HCT116 (cell line): ENCODE measurements at regions of chr1 and their contacts with region 1.

Region 1: DNA sequence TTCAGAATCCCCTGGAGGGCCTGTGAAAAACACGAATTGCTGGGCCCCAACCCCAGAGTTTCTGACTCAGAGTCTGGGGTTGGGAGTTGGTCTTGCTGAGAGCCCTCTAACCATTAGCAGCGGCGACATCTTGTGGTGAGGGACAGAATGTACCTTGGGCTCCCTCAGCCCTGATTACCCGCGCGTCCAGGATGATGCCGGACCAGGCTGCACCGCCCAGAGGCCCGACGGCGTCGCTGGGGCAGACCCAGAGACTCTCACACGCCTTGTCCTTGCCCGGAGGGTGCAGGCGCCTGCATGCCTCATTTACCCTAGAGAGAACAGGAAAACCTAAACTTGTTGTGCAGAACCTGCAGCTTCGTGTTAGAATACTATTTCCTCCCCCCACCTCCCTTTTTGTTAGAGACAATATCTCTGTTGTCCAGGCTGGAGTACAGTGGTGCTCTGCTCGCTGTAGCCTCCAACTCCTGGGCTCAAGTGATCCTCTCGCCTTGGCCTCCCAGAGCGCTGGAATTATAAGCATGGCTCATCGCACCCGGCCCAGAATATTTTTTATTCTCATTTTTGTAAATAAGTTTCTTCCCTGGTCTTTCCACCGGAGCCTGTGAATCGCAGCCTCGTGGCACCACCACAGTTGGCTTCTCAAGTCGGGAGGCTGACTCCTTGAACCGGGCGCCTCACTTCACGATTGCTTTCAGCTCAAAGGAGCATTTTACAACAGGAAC is 22.2 kb upstream of the RD3 start:
- DNase-seq: peak; percentile 71
- ATAC-seq: peak; percentile 76
- H3K4me3 ChIP-seq: peak overlapping the region in 1 of 2 experiments; percentile 26; a peak in 1 of 4 replicates
- H3K27ac ChIP-seq: peak overlapping the region; percentile 51; the same call in 1 of the 2 replicates
- H3K4me1 ChIP-seq: peaks cover 36 to 46% of the 10 kb centered on the region in 2 experiments
- H3K27me3 ChIP-seq: no peaks in the 10 kb centered on the region
- CTCF ChIP-seq: peak; percentile 74 to 88 (median 80)
- POLR2A ChIP-seq: no peak
- RAD21 ChIP-seq: peak; percentile 96

Region 2: DNA sequence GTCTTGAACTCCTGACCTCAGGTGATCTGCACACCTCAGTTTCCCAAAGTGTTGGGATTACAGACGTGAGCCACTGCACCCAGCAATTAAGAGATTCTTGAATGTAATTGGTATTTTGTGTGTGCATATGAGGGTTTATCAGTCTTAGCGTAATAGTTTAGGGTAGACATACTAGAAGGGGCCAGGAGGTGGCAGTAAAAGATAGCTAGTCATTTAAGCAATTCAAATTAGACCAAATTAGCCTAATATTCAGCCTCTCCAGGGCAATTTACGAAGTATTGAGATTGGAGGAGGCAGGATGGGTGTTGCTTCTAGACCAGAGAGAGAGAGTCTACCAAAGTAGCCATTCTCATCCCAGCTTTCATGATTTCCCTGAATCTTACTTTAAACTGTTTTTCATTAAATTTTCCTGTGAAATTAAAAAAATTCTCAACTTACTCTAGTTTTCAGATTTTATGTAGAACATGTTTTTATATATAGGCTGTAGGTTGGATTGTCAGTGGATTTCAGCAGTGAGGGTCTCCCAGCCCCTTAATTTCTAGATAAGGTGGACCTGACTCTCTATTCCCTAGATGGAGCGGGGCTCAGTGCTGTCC is 1065.8 kb before region 1 on chr1:
- CTCF ChIA-PET with region 1: interaction called, 3 read pairs
- POLR2A ChIA-PET with region 1: no interaction called
- RAD21 ChIA-PET with region 1: no interaction called
- intact Hi-C with region 1: loop called (anchors 10 kb)
- DNase-seq: peak; percentile 33
- ATAC-seq: peak; percentile 87
- H3K4me3 ChIP-seq: no peak overlapping the region
- H3K27ac ChIP-seq: no peak overlapping the region
- H3K4me1 ChIP-seq: peaks cover 4% of the 10 kb centered on the region in 2 experiments; a peak in 2 of 4 replicates
- H3K27me3 ChIP-seq: peaks cover 34% of the 10 kb centered on the region
- CTCF ChIP-seq: peak; percentile 56 to 73 (median 59); a peak in 5 of 6 replicates
- POLR2A ChIP-seq: no peak
- RAD21 ChIP-seq: peak; percentile 79

Region 3: DNA sequence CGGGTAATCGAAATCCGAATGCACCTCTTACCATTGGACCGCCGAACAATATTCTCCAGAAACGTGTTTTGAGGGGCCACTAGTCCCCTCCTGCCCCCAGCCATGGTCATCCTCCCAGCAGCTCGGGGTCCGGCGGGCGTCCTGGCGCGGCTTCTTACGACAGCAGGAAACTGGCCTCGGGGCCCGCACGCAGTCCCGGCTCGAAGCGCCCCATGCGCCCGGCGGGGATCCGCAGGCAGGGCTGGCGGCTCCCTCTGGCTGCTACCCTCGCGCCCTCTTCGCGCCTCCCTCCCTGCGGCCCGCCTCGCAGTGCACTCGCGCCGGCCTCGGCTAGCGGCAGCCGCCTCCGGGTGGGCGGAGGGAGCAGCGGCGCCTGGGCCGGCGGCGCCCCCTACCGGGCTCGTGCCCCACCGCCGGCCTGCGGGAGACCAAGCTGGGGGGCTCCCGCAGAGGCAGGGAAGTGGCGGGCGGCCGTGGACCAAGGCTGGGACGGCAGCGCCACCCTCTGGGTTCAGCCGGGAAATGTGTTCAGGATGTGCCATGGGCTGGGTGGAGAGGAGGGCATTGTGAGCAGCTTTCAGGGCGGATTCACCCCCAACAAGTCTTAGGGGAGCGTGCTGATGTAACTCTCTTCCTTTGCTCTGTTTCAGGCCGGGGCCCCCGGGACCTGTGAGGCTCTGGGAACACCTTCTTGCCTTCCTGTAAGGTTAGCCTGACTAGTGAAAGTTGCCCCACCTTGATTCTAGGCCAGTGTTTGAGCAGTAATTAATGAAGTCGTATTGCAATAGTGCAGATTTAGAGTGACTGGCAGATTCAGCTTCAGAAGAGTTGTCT is 380.1 kb before region 1 on chr1 and contains the start of gene KCNH1:
- CTCF ChIA-PET with region 1: interaction called, 3 read pairs
- POLR2A ChIA-PET with region 1: no interaction called
- RAD21 ChIA-PET with region 1: no interaction called
- intact Hi-C with region 1: loop called (anchors 1 kb)
- DNase-seq: peak; percentile 46
- ATAC-seq: peak; percentile 91
- H3K4me3 ChIP-seq: no peak within 1 kb of the TSS
- H3K27ac ChIP-seq: no peak within 1 kb of the TSS
- H3K4me1 ChIP-seq: peaks cover 0 to 4% of the 10 kb centered on the region in 2 experiments; a peak in 2 of 4 replicates
- H3K27me3 ChIP-seq: peaks cover 66% of the 10 kb centered on the region
- CTCF ChIP-seq: peak; percentile 78 to 97 (median 90)
- POLR2A ChIP-seq: no peak
- RAD21 ChIP-seq: peak; percentile 94
- total RNA-seq, gene KCNH1: not detected

Region 4: GRCh38 chr1:211280910-211281309 is 233.3 kb before region 1 on chr1:
- CTCF ChIA-PET with region 1: no interaction called
- POLR2A ChIA-PET with region 1: no interaction called
- RAD21 ChIA-PET with region 1: no interaction called
- intact Hi-C with region 1: no loop called
- DNase-seq: no peak
- ATAC-seq: no peak
- H3K4me3 ChIP-seq: no peak overlapping the region
- H3K27ac ChIP-seq: no peak overlapping the region
- H3K4me1 ChIP-seq: no peaks in the 10 kb centered on the region
- H3K27me3 ChIP-seq: no peaks in the 10 kb centered on the region
- CTCF ChIP-seq: no peak
- POLR2A ChIP-seq: no peak
- RAD21 ChIP-seq: no peak

Region 5: GRCh38 chr1:211323156-211324063 is 190.8 kb before region 1 on chr1:
- CTCF ChIA-PET with region 1: interaction called, 13 read pairs
- POLR2A ChIA-PET with region 1: no interaction called
- RAD21 ChIA-PET with region 1: no interaction called
- intact Hi-C with region 1: loop called (anchors 1 kb)
- DNase-seq: no peak
- ATAC-seq: peak; percentile 81
- H3K4me3 ChIP-seq: no peak overlapping the region
- H3K27ac ChIP-seq: no peak overlapping the region
- H3K4me1 ChIP-seq: peaks cover 0 to 26% of the 10 kb centered on the region in 2 experiments; a peak in 3 of 4 replicates
- H3K27me3 ChIP-seq: no peaks in the 10 kb centered on the region
- CTCF ChIP-seq: peak; percentile 80 to 82 (median 82)
- POLR2A ChIP-seq: no peak
- RAD21 ChIP-seq: peak; percentile 90

Region 6: GRCh38 chr1:211578640-211579433 is 64.6 kb after region 1 on chr1 and contains the start of gene SLC30A1:
- CTCF ChIA-PET with region 1: no interaction called
- POLR2A ChIA-PET with region 1: no interaction called
- RAD21 ChIA-PET with region 1: no interaction called
- intact Hi-C with region 1: loop called (anchors 2 kb)
- DNase-seq: peak; percentile 94
- ATAC-seq: peak; percentile 87
- H3K4me3 ChIP-seq: peak within 1 kb of the TSS; percentile 74 to 84
- H3K27ac ChIP-seq: peak within 1 kb of the TSS; percentile 84
- H3K4me1 ChIP-seq: peaks cover 10 to 40% of the 10 kb centered on the region in 2 experiments
- H3K27me3 ChIP-seq: no peaks in the 10 kb centered on the region
- CTCF ChIP-seq: no peak
- POLR2A ChIP-seq: peak; percentile 30
- RAD21 ChIP-seq: no peak
- total RNA-seq, gene SLC30A1: 9.7 TPM